Mammary epithelial cell (primary cell): ENCODE measurements at regions of chr6 and their contacts with region 1.

Region 1: GRCh38 chr6:157148391-157149323 is 174.7 kb downstream of the TMEM242 start:
- DNase-seq: peak; percentile 88
- H3K4me3 ChIP-seq: peak overlapping the region; percentile 3 to 23 (median 14)
- H3K27ac ChIP-seq: peak overlapping the region; percentile 75
- H3K4me1 ChIP-seq: peaks cover 40% of the 10 kb centered on the region
- H3K27me3 ChIP-seq: no peaks in the 10 kb centered on the region
- CTCF ChIP-seq: no peak

Region 2: GRCh38 chr6:156627524-156627923 is 521.1 kb before region 1 on chr6:
- CTCF ChIA-PET with region 1: no interaction called
- dilution Hi-C with region 1: no loop called
- in situ Hi-C with region 1: no loop called
- intact Hi-C with region 1: no loop called
- DNase-seq: no peak
- H3K4me3 ChIP-seq: no peak overlapping the region
- H3K27ac ChIP-seq: no peak overlapping the region
- H3K4me1 ChIP-seq: no peaks in the 10 kb centered on the region
- H3K27me3 ChIP-seq: no peaks in the 10 kb centered on the region
- CTCF ChIP-seq: no peak

Region 3: DNA sequence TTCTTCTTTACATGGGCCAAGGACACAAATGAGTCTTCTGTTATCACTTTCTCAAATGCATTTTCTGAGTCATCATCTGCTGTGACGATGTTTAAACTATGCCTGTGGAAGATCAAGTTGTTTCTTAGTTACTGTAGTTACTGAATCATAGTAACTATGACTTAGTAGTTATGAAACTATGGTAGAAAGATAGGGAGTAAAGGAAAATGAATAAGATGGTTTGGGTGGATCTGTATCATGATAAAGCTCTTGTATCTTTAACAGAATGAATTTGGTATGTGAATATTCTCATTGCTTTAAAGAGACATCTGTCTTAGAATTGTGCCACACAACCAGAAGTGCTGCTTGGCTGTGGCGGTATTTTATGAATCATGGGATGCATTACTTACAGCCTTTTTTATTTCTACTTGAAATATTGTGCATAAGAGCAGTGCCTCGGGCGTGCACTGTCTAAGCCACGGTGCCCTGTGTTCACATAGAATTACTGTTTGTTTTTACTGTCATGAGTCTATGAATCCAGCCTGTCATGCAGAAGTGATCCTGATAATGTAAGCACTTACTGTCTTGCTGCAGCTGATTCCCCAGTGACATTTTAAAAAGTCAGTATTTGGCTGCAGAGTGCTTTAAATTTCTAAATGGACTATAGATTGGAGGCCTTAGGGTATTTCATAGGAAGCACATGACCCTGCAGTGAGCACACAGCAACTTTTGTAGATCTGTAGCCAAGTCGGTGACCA is 40.6 kb before region 1 on chr6:
- CTCF ChIA-PET with region 1: no interaction called
- dilution Hi-C with region 1: no loop called
- in situ Hi-C with region 1: no loop called
- intact Hi-C with region 1: loop called (anchors 1 kb)
- DNase-seq: peak; percentile 84
- H3K4me3 ChIP-seq: no peak overlapping the region
- H3K27ac ChIP-seq: peak overlapping the region; percentile 82
- H3K4me1 ChIP-seq: peaks cover 24% of the 10 kb centered on the region
- H3K27me3 ChIP-seq: no peaks in the 10 kb centered on the region
- CTCF ChIP-seq: no peak